CD4-positive, alpha-beta memory T cell (primary cell): ENCODE measurements at regions of chr9 and their contacts with region 1.

Region 1: GRCh38 chr9:128656416-128657343 is at the start of gene DYNC2I2:
- DNase-seq: peak; percentile 95 to 96 (median 96)
- H3K4me3 ChIP-seq: peak within 1 kb of the TSS; percentile 95 to 98
- H3K4me3 Mint-ChIP-seq: peak within 1 kb of the TSS; percentile 91 to 98 (median 94)
- H3K27ac ChIP-seq: peak within 1 kb of the TSS; percentile 95
- H3K27ac Mint-ChIP-seq: peak within 1 kb of the TSS; percentile 95 to 100 (median 99)
- H3K4me1 ChIP-seq: peaks cover 8% of the 10 kb centered on the region
- H3K4me1 Mint-ChIP-seq: peaks cover 2 to 15% (median 6%) of the 10 kb centered on the region in 4 donors
- H3K27me3 ChIP-seq: no peaks in the 10 kb centered on the region
- H3K27me3 Mint-ChIP-seq: no peaks in the 10 kb centered on the region
- total RNA-seq, gene DYNC2I2: 4.3 to 4.6 TPM

Region 2: GRCh38 chr9:128504485-128505413 is 151.9 kb before region 1 on chr9 and contains the start of gene GLE1:
- CTCF ChIA-PET with region 1: no interaction called
- POLR2A ChIA-PET with region 1: no interaction called
- intact Hi-C with region 1: loop called (anchors 1 kb)
- DNase-seq: peak; percentile 92 to 96 (median 95)
- H3K4me3 ChIP-seq: peak within 1 kb of the TSS; percentile 96 to 100
- H3K4me3 Mint-ChIP-seq: peak within 1 kb of the TSS; percentile 96 to 100 (median 99)
- H3K27ac ChIP-seq: peak within 1 kb of the TSS; percentile 91
- H3K27ac Mint-ChIP-seq: peak within 1 kb of the TSS; percentile 96 to 100 (median 99)
- H3K4me1 ChIP-seq: peaks cover 21% of the 10 kb centered on the region
- H3K4me1 Mint-ChIP-seq: peaks cover 13 to 45% (median 25%) of the 10 kb centered on the region in 4 donors
- H3K27me3 ChIP-seq: no peaks in the 10 kb centered on the region
- H3K27me3 Mint-ChIP-seq: no peaks in the 10 kb centered on the region
- total RNA-seq, gene GLE1: 31.1 to 32.2 TPM

Region 3: DNA sequence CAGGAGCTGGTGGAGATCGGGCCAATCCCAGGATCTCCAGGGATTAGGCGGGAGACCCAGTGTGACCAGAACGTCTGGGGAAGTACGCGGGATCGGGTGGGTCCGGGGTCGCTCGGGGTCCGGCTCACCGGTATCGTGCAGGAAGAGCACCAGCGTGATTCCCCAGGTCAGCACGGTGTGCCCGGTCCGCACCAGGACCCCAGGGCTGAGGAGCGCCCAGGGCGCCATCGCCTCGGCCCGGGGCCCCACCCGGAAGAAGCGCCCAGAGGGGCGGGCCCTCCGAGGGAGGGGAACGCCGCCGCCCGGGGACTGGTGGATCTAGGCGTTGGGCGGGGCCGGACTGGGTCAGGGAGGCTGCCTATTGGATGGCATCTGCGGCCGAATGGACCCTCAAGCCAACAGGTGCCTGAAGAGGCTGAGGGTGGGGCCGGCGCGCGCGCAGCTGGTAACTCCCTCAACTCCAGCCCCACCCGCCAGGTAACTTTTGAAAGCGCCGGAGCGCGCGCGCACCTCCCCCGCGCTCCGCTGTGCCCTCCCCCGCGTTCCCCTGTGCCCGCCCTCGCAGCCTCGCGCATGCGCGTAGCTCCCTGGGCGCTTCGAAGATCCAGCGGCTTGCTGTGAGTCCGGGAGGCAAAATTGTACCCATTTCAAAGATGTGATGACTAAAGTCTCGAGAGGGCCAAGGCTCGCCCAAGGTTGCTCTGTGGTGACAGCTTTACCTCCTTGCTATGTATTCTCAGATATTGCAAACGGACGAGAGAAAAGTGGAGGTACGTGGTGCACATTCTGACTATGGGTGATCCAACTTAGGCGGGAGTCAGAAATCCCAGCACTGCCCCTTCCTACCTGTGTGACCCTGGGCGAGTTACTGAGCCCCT is 67.4 kb after region 1 on chr9 and contains the start of gene ZDHHC12:
- CTCF ChIA-PET with region 1: no interaction called
- POLR2A ChIA-PET with region 1: interaction called, 16 read pairs
- intact Hi-C with region 1: loop called (anchors 1 kb)
- DNase-seq: peak; percentile 98 to 99 (median 99)
- H3K4me3 ChIP-seq: peak within 1 kb of the TSS; percentile 89 to 95
- H3K4me3 Mint-ChIP-seq: peak within 1 kb of the TSS; percentile 90 to 94 (median 92)
- H3K27ac ChIP-seq: peak within 1 kb of the TSS; percentile 70
- H3K27ac Mint-ChIP-seq: peak within 1 kb of the TSS; percentile 89 to 97 (median 95)
- H3K4me1 ChIP-seq: peaks cover 28% of the 10 kb centered on the region
- H3K4me1 Mint-ChIP-seq: peaks cover 23 to 45% (median 32%) of the 10 kb centered on the region in 4 donors
- H3K27me3 ChIP-seq: no peaks in the 10 kb centered on the region
- H3K27me3 Mint-ChIP-seq: no peaks in the 10 kb centered on the region
- total RNA-seq, gene ZDHHC12: 24.6 to 25.7 TPM